ENCODE measurements at regions of chr18 and their contacts with region 1.

Region 1: DNA sequence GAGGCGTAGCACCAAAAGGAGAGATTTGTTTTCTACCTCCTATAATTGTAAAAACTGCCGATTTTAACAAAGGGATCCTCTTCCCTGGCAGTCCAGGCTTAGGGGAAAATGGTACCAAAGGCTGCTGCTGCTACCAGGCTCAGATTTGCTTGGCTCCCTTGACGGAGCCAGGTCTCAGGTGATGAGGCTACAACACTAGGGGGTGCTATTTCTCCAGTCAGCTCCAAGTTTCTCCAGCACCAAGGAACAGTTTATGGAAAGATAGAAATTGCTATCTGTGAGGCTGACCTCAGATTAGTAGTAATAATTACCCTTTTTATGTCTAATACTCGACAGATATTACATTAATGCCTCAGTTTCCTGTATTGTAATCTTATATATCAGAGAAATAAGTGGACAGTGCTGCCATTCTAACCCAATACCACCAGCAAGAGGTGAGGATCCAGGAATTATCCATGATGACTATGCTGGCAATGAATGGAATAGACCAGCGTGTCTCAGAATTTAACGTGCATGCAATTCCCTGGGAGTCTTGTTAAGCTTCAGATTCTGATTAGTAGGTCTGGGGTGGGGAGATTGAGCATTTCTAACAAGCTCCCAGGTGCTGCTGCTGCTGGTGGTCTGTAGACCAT is 111.3 kb downstream of the ESCO1 start:
- DNase-seq: peak; percentile 71 to 78 (median 72)
- ATAC-seq: peak; percentile 92
- H3K4me3 ChIP-seq: no peak overlapping the region
- H3K27ac ChIP-seq: no peak overlapping the region
- H3K4me1 ChIP-seq: peaks cover 5% of the 10 kb centered on the region in 2 experiments; a peak in 1 of 5 replicates
- H3K27me3 ChIP-seq: peaks cover 0 to 8% of the 10 kb centered on the region in 2 experiments; a peak in 2 of 5 replicates
- CTCF ChIP-seq: peak; percentile 77 to 90 (median 86)
- EP300 ChIP-seq: no peak
- POLR2A ChIP-seq: no peak
- RAD21 ChIP-seq: peak; percentile 56 to 88

Region 2: DNA sequence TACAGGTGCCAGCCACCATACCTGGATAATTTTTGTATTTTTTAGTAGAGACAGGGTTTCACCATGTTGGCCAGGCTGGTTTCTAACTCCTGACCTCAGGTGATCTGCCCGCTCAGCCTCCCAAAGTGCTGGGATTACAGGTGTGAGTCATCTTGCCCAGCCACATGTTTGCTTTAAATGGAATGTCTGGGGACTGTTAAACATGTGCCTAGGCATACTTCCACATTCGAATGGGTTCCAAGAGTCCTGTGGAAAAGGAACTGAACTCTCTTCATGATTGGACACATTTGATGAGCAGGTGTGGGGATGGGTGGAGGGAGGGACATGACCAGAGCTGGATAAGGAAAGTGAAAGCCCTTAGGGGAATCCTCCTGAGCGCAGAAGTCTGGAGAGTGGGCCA is 305.6 kb before region 1 on chr18:
- CTCF ChIA-PET with region 1: no interaction called
- POLR2A ChIA-PET with region 1: no interaction called
- in situ Hi-C with region 1: no loop called
- intact Hi-C with region 1: no loop called
- DNase-seq: no peak
- ATAC-seq: no peak
- H3K4me3 ChIP-seq: no peak overlapping the region
- H3K27ac ChIP-seq: no peak overlapping the region
- H3K4me1 ChIP-seq: no peaks in the 10 kb centered on the region
- H3K27me3 ChIP-seq: no peaks in the 10 kb centered on the region
- CTCF ChIP-seq: no peak
- EP300 ChIP-seq: no peak
- POLR2A ChIP-seq: no peak
- RAD21 ChIP-seq: no peak

Region 3: GRCh38 chr18:21686282-21687105 is 197.3 kb after region 1 on chr18:
- CTCF ChIA-PET with region 1: no interaction called
- POLR2A ChIA-PET with region 1: no interaction called
- in situ Hi-C with region 1: no loop called
- intact Hi-C with region 1: no loop called
- DNase-seq: peak in 2 of 4 experiments; percentile 52 to 73
- ATAC-seq: peak; percentile 94
- H3K4me3 ChIP-seq: no peak overlapping the region
- H3K27ac ChIP-seq: peak overlapping the region; percentile 73
- H3K4me1 ChIP-seq: peaks cover 3 to 7% of the 10 kb centered on the region in 2 experiments; a peak in 4 of 5 replicates
- H3K27me3 ChIP-seq: no peaks in the 10 kb centered on the region
- CTCF ChIP-seq: no peak
- EP300 ChIP-seq: peak; percentile 72
- POLR2A ChIP-seq: no peak
- RAD21 ChIP-seq: 0 out of 4 replicates have a peak, but pooled peaks of 1 of the 2 experiments have one; percentile 14

Region 4: GRCh38 chr18:21740724-21741510 is 251.7 kb after region 1 on chr18 and contains the start of gene MIB1:
- CTCF ChIA-PET with region 1: no interaction called
- POLR2A ChIA-PET with region 1: no interaction called
- in situ Hi-C with region 1: no loop called
- intact Hi-C with region 1: loop called (anchors 10 kb)
- DNase-seq: peak; percentile 63 to 74 (median 68)
- ATAC-seq: peak; percentile 72
- H3K4me3 ChIP-seq: peak within 1 kb of the TSS; percentile 90
- H3K27ac ChIP-seq: peak within 1 kb of the TSS; percentile 95
- H3K4me1 ChIP-seq: peaks cover 12 to 17% of the 10 kb centered on the region in 2 experiments; a peak in 4 of 5 replicates
- H3K27me3 ChIP-seq: no peaks in the 10 kb centered on the region
- CTCF ChIP-seq: no peak
- EP300 ChIP-seq: no peak
- POLR2A ChIP-seq: peak; percentile 87
- RAD21 ChIP-seq: no peak
- polyA plus RNA-seq, gene MIB1: 7.2 to 7.6 TPM

Region 5: GRCh38 chr18:21851327-21851972 is 362.2 kb after region 1 on chr18:
- CTCF ChIA-PET with region 1: interaction called, 13 read pairs
- POLR2A ChIA-PET with region 1: no interaction called
- in situ Hi-C with region 1: no loop called
- intact Hi-C with region 1: loop called (anchors 5 kb)
- DNase-seq: peak in 1 of 4 experiments; percentile 19
- ATAC-seq: peak; percentile 69; the same call in 1 of the 3 replicates
- H3K4me3 ChIP-seq: no peak overlapping the region
- H3K27ac ChIP-seq: no peak overlapping the region
- H3K4me1 ChIP-seq: no peaks in the 10 kb centered on the region
- H3K27me3 ChIP-seq: no peaks in the 10 kb centered on the region
- CTCF ChIP-seq: peak; percentile 14 to 50 (median 17); a peak in 3 of 6 replicates
- EP300 ChIP-seq: no peak
- POLR2A ChIP-seq: no peak
- RAD21 ChIP-seq: peak; percentile 15 to 56; a peak in 3 of 4 replicates

Region 6: DNA sequence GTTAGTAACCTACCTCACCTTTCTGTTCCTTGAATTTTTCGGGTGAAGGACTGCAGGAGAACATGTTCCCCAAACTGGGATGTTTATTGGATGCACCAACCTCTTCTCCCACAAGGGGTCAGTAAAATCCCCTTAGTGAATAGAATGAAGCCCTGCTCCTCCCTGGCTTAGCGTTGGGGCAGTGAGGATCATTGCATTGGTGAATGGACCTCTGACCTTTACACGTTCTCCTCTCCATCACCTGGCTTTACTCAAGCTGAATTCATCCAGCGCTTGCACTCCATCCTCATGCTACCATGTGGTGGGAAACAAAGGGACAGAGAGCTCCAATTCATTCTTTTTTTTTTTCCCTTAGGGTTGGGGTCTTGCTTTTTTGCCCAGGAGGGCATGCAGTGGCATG is 408.6 kb after region 1 on chr18:
- CTCF ChIA-PET with region 1: no interaction called
- POLR2A ChIA-PET with region 1: interaction called, 3 read pairs
- in situ Hi-C with region 1: no loop called
- intact Hi-C with region 1: loop called (anchors 5 kb)
- DNase-seq: peak; percentile 55 to 68 (median 60)
- ATAC-seq: peak; percentile 90
- H3K4me3 ChIP-seq: no peak overlapping the region
- H3K27ac ChIP-seq: no peak overlapping the region
- H3K4me1 ChIP-seq: peaks cover 0 to 6% of the 10 kb centered on the region in 2 experiments; a peak in 2 of 5 replicates
- H3K27me3 ChIP-seq: peaks cover 2 to 6% of the 10 kb centered on the region in 2 experiments; a peak in 2 of 5 replicates
- CTCF ChIP-seq: peak; percentile 77 to 80 (median 78)
- EP300 ChIP-seq: no peak
- POLR2A ChIP-seq: no peak
- RAD21 ChIP-seq: peak; percentile 36 to 82; a peak in 3 of 4 replicates